ENCODE measurements at regions of chr19 and their contacts with region 1.

Region 1: GRCh38 chr19:42850981-42851717 is 28.4 kb downstream of the PSG1 start:
- DNase-seq: peak; percentile 70 to 94
- H3K4me3 ChIP-seq: no peak overlapping the region
- H3K27ac ChIP-seq: peak overlapping the region; percentile 96
- H3K4me1 ChIP-seq: peaks cover 47% of the 10 kb centered on the region
- H3K27me3 ChIP-seq: no peaks in the 10 kb centered on the region
- CTCF ChIP-seq: no peak

Region 2: GRCh38 chr19:42831271-42832019 is 19.7 kb before region 1 on chr19:
- CTCF ChIA-PET with region 1: no interaction called
- POLR2A ChIA-PET with region 1: no interaction called
- intact Hi-C with region 1: loop called (anchors 1 kb)
- DNase-seq: peak; percentile 63 to 98
- H3K4me3 ChIP-seq: no peak overlapping the region
- H3K27ac ChIP-seq: peak overlapping the region; percentile 98
- H3K4me1 ChIP-seq: peaks cover 37% of the 10 kb centered on the region
- H3K27me3 ChIP-seq: no peaks in the 10 kb centered on the region
- CTCF ChIP-seq: no peak; the same call in 1 of the 2 replicates

Region 3: GRCh38 chr19:42872578-42872977 is 21.4 kb after region 1 on chr19:
- CTCF ChIA-PET with region 1: no interaction called
- POLR2A ChIA-PET with region 1: interaction called, 3 read pairs
- intact Hi-C with region 1: loop called (anchors 2 kb)
- DNase-seq: no peak
- H3K4me3 ChIP-seq: no peak overlapping the region
- H3K27ac ChIP-seq: no peak overlapping the region
- H3K4me1 ChIP-seq: peaks cover 32% of the 10 kb centered on the region
- H3K27me3 ChIP-seq: no peaks in the 10 kb centered on the region
- CTCF ChIP-seq: no peak

Measured in PC-9 (cell line).